Posterior cingulate gyrus (tissue), 11 donors: ENCODE measurements at regions of chr13 and their contacts with region 1.

Region 1: DNA sequence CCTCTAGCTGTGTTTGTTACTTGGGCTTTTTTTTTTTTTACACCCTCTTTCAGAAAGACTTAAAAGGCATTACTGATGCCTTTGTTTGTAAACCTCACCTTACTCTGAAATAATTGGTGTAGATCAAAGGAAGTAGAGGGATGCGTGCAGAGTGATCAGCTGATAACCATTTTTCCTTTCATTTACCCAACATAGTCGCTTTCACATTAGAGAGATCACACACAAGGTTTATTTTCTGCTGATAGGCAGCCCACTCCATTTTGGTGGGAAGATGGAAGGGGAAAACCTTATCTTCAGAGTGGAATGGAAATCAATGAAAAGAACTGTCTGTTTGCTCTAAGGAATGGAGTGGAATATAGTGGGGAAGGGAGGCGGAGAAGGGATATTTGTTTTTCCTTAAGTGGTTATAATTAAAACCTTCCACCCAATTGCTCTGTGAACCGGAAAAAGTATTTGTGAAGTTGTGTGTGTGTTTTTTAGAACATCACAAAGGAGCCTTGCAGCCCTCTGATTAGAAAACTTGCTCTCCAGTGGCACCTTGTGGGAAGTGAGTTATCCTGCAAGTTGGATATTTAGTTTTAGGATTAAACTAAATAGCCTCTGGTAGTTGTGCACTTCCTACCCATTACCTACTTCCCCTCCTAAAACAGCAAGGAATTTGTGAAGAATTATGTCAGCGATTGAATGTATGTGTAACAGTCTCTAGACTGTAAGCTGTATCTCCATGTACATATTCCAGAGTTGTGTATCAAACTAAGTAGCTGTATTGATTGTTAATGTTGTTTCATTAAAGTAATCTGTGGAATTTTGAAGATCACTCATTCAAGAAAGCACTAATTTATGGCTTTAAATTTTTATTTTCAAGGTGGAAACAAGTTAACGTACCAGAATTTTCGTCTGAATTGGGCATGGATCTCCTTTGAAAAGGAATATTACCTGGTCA is 76.8 kb downstream of the FREM2 start:
- DNase-seq: peak in 5 of 10 donors; percentile 8 to 59 (median 35)

Region 2: DNA sequence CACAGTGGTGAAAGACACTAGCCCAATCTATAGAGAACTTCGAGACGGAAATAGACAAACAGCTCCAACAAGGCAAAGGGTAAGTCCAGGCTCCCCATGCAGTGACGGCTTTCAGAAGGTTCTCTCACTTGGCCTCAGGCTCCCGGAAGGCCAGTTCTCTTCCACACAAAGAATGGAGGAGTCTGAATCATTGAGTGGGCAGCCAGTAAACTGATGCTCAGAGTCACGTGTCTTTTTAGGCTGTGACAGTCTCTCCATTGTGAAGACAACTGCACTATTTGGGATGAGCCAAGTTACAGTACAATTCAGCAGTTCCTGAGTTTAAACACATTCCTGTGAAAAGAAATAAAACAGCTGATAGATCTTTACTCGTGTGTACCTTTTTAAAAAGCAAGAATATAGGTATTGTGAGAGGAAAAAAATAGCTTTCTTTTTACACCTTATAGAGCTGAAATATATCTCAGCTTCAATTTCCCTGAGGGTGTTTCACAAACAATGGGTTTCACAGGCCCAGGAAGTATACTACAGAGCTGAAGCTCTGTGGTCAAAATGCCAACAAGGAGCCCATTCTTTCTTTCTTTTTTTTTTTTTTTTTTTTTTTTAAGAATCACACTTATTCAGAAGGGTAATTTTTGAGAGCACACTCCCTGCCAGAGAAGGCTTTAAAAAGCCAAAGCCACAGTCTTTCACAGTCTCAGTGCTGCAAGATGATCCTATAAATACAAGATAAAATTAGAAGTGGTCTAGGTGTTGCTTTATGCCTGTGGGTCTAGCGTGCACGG is 58.3 kb after region 1 on chr13:
- intact Hi-C with region 1: loop called (anchors 2 kb)
- DNase-seq: peak in 9 of 10 donors; percentile 21 to 93 (median 46)